AG04449 (cell line): ENCODE measurements at regions of chr5 and their contacts with region 1.

Region 1: DNA sequence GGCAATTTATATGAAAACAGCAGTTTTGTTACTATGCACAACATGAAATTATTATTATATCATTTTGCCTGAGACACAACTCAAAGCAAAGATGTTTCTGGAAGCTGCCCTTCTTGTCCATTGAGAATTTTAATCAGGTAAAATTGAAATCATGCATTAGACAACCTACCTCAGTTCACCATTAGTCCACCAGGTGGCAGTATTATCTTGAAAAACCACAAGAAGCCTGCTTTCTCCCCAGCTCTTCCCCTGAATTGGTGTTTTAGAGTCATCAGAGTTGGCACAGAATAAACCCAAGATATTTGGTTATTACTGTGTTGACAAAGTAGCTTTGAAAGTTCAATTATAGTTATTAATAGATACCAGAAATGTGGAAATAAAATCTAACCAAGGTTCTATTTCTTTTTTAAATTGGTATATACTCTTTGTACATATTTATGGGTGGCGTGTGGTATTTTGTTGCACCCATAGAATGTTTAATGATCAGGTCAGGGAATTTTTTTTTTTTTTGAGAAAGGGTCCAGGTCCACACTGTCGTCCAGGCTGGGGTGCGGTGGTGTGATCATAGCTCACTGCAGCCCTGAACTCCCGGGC is 25.7 kb downstream of the UTP15 start:
- DNase-seq: peak; percentile 81
- H3K4me3 ChIP-seq: no peak overlapping the region
- CTCF ChIP-seq: peak; percentile 28

Region 2: DNA sequence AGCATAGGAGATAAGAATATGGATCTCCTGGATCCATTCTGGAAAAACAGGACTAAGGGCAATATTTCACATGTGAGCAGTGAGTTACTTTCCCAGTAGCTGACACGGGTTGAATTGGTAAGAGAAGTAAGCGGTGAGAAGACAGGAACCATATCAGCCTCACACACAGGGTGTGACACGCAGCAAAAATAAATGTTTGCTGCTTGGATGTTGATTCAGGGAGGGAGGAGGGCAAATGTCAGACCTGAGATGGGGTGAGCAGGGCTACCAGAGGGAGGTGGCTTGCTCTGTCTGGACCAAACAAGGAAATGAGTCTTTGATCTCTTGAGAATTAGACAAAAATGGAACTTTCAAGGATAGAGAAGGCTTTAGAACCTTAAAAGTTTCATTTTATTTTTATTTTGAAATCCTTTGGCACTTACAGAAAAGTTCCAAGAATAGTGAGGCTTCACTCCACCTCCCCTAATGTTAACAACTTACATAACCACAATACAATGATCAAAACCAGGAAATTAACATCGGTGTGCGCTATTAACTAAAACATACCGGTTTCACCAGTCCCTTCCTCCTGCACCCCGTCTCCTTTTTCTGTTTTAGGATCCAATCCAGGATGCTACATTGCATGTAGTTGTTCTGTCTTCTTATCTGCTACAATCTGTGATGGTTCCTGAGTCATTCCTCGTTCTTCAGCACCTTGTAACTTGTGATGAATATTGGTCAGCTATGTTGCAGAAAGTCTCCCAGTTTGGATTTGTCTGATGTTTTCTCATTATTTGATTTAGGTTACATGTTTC is 14.2 kb after region 1 on chr5:
- CTCF ChIA-PET with region 1: interaction called, 19 read pairs
- POLR2A ChIA-PET with region 1: no interaction called
- DNase-seq: no peak
- H3K4me3 ChIP-seq: no peak overlapping the region
- CTCF ChIP-seq: no peak

Region 3: DNA sequence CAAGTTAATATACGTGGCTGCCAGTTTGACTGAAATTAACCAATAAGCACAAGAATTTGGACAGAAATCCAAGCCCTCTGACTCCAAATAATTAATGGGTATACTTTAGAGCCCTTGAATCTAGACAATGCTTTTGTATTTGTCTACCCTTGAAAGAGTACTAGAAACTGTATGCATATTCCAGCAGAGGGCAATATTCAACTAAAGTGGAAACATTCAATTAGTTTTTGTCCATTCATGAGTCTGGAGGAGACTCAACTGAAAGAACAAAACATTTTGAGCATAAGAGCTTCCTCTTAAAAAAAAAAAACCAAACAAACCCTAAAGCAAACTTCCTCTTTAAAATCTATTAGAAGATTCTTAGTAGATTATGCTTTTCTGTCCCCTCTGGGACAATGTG is 192.6 kb after region 1 on chr5:
- CTCF ChIA-PET with region 1: interaction called, 517 read pairs
- POLR2A ChIA-PET with region 1: no interaction called
- DNase-seq: no peak
- H3K4me3 ChIP-seq: no peak overlapping the region
- CTCF ChIP-seq: peak; percentile 8

Region 4: GRCh38 chr5:73826301-73827105 is 235.3 kb after region 1 on chr5:
- CTCF ChIA-PET with region 1: interaction called, 15 read pairs
- POLR2A ChIA-PET with region 1: no interaction called
- DNase-seq: peak; percentile 65
- H3K4me3 ChIP-seq: no peak overlapping the region
- CTCF ChIP-seq: no peak

Region 5: DNA sequence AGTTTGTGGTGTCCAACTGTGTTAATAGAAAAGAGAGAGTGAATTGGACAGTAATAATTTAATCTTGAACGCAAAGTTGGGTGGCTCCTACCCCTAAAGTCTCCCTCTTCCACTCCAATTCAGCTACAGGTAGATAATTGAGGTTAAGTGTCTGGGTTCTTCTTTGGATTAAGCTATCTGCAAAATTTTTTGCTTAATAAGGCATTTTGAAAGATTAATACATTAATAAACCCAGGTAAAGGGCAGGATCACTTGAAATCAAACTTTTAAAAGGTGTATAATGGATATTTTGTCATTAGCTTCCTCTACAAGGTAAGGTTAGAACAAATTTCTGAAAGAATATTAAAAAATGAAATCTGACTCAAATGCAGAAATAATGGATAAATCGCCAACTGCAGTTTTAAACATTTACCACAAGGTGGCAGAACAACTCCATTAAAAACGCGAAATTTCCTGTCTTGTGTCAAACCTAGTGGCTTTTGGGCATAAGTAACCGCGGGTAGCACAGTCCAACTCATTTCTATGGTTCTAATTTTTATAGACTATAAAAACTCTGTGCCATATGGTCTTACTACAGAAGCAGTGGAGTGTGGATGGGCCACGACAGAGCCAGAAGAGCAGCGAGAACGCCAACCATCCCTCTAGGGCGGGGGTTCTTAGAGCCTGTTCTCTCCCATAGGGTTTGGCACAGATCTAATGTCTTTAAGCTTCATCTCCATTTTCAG is 311.3 kb after region 1 on chr5:
- CTCF ChIA-PET with region 1: interaction called, 25 read pairs
- POLR2A ChIA-PET with region 1: no interaction called
- DNase-seq: peak; percentile 28
- H3K4me3 ChIP-seq: no peak overlapping the region
- CTCF ChIP-seq: peak; percentile 45